Sigmoid colon (tissue), 7 donors: ENCODE measurements at regions of chr1 and their contacts with region 1.

Region 1: GRCh38 chr1:42173155-42173933 is 8.8 kb upstream of the GUCA2A start:
- DNase-seq: peak; percentile 77
- H3K4me3 ChIP-seq: no peak overlapping the region
- H3K27ac ChIP-seq: peak overlapping the region; percentile 12 to 67 (median 48)
- H3K4me1 ChIP-seq: peaks cover 0 to 27% (median 15%) of the 10 kb centered on the region in 4 donors
- H3K27me3 ChIP-seq: no peaks in the 10 kb centered on the region
- CTCF ChIP-seq: peak; percentile 66 to 97 (median 91)
- EP300 ChIP-seq: no peak
- POLR2A ChIP-seq: no peak

Region 2: DNA sequence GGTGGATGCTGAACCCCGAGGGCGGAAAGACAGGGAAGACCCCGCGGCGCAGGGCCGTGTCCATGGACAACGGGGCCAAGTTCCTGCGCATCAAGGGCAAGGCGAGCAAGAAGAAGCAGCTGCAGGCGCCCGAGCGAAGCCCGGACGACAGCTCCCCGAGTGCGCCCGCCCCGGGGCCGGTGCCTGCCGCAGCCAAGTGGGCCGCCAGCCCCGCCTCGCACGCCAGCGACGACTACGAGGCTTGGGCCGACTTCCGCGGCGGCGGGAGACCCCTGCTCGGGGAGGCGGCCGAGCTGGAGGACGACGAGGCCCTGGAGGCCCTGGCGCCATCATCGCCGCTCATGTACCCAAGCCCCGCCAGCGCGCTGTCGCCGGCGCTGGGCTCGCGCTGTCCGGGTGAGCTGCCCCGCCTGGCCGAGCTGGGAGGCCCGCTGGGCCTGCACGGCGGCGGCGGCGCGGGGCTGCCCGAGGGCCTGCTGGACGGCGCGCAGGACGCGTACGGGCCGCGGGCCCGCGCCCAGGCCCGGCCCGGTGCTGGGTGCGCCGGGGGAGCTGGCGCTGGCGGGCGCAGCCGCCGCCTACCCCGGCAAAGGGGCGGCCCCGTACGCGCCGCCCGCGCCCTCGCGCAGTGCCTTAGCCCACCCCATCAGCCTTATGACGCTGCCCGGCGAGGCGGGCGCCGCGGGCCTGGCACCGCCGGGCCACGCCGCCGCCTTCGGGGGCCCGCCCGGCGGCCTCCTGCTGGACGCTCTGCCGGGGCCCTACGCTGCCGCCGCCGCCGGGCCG is 791.5 kb before region 1 on chr1:
- intact Hi-C with region 1: loop called (anchors 5 kb)
- DNase-seq: peak; percentile 83
- H3K4me3 ChIP-seq: peak overlapping the region; percentile 56 to 69 (median 66)
- H3K27ac ChIP-seq: peak overlapping the region; percentile 96 to 100 (median 98)
- H3K4me1 ChIP-seq: peaks cover 0 to 53% (median 46%) of the 10 kb centered on the region in 4 donors
- H3K27me3 ChIP-seq: no peaks in the 10 kb centered on the region
- CTCF ChIP-seq: no peak
- EP300 ChIP-seq: no peak
- POLR2A ChIP-seq: no peak

Region 3: GRCh38 chr1:41573785-41574713 is 599.3 kb before region 1 on chr1:
- intact Hi-C with region 1: loop called (anchors 2 kb)
- DNase-seq: peak; percentile 81
- H3K4me3 ChIP-seq: no peak overlapping the region
- H3K27ac ChIP-seq: no peak overlapping the region
- H3K4me1 ChIP-seq: no peaks in the 10 kb centered on the region
- H3K27me3 ChIP-seq: no peaks in the 10 kb centered on the region
- CTCF ChIP-seq: peak; percentile 54 to 77 (median 76)
- EP300 ChIP-seq: no peak
- POLR2A ChIP-seq: no peak

Region 4: DNA sequence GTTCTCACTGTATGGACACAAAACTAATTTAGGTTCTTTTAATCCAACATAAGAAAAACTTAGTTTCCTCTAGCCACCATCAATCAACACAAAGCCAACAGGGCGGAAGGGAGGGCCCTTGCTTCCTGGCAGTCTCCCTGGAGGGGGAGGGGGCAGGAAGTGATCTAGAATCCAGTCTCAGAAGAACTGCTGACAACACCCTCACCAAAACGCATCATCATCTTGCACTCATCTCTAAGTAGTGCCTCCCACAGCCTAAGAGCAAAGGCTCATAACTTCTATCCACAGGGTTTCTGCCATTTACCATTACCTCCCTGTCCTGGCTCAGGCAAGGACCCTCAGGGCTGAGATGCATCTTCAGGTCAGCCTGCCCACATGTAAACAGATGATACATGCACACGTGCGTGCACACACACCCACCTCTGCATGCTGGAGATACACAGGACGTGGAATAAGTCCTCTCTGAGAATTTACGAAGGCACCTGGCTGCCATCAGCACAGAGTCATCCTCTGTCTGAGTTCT is 275.1 kb before region 1 on chr1:
- intact Hi-C with region 1: no loop called
- DNase-seq: no peak
- H3K4me3 ChIP-seq: no peak overlapping the region
- H3K27ac ChIP-seq: no peak overlapping the region
- H3K4me1 ChIP-seq: peaks cover 0 to 11% (median 3%) of the 10 kb centered on the region in 4 donors
- H3K27me3 ChIP-seq: no peaks in the 10 kb centered on the region
- CTCF ChIP-seq: no peak
- EP300 ChIP-seq: no peak
- POLR2A ChIP-seq: no peak

Region 5: GRCh38 chr1:41983451-41983850 is 189.9 kb before region 1 on chr1:
- intact Hi-C with region 1: no loop called
- DNase-seq: no peak
- H3K4me3 ChIP-seq: no peak overlapping the region
- H3K27ac ChIP-seq: no peak overlapping the region
- H3K4me1 ChIP-seq: no peaks in the 10 kb centered on the region
- H3K27me3 ChIP-seq: no peaks in the 10 kb centered on the region
- CTCF ChIP-seq: no peak
- EP300 ChIP-seq: no peak
- POLR2A ChIP-seq: no peak

Region 6: DNA sequence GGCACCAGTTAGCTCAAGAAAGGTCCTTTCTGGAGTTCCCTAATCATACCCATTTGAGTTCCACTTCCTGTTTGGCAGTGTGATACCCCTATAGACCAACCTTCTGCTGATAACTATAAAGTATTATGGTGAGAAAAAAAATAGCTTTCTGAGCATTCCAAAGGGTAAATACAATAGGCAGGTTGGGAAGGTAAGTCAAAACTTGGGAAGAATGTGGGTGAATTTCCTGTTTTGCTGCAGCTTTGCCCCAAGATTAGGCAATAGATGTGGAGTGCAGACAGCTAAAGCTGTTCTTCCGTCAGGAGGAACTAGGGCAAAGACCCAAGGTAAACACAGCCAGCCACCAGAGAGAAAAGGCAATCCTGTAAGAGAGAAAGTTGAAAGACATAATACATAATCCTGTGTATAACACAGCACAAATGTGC is 41.1 kb after region 1 on chr1:
- intact Hi-C with region 1: no loop called
- DNase-seq: no peak
- H3K4me3 ChIP-seq: no peak overlapping the region
- H3K27ac ChIP-seq: peak overlapping the region in 1 of 4 donors; percentile 46
- H3K4me1 ChIP-seq: peaks cover 0 to 19% (median 9%) of the 10 kb centered on the region in 4 donors
- H3K27me3 ChIP-seq: no peaks in the 10 kb centered on the region
- CTCF ChIP-seq: no peak
- EP300 ChIP-seq: no peak
- POLR2A ChIP-seq: no peak

Region 7: GRCh38 chr1:42456010-42456758 is 282.8 kb after region 1 on chr1 and contains the starts of genes PPCS and ZMYND12:
- intact Hi-C with region 1: loop called (anchors 10 kb)
- DNase-seq: peak; percentile 92
- H3K4me3 ChIP-seq: peak within 1 kb of the TSS; percentile 80 to 99 (median 92)
- H3K27ac ChIP-seq: peak within 1 kb of the TSS; percentile 88 to 93 (median 90)
- H3K4me1 ChIP-seq: peaks cover 0 to 24% (median 19%) of the 10 kb centered on the region in 4 donors
- H3K27me3 ChIP-seq: no peaks in the 10 kb centered on the region
- CTCF ChIP-seq: peak in 2 of 4 experiments; percentile 23 to 45
- EP300 ChIP-seq: no peak
- POLR2A ChIP-seq: peak; percentile 36 to 66
- total RNA-seq, gene PPCS: 32.1 to 99.9 (median 52.5) TPM
- total RNA-seq, gene ZMYND12: 0.54 to 1.1 (median 0.77) TPM